ENCODE measurements at regions of chr12 and their contacts with region 1.

Region 1: GRCh38 chr12:49018261-49019119 is at the start of gene PRKAG1:
- DNase-seq: peak; percentile 99
- CTCF ChIP-seq: peak; percentile 53

Region 2: GRCh38 chr12:49031553-49032162 is 13.2 kb after region 1 on chr12:
- CTCF ChIA-PET with region 1: interaction called, 203 read pairs
- POLR2A ChIA-PET with region 1: interaction called, 3 read pairs
- DNase-seq: no peak
- CTCF ChIP-seq: no peak

Region 3: DNA sequence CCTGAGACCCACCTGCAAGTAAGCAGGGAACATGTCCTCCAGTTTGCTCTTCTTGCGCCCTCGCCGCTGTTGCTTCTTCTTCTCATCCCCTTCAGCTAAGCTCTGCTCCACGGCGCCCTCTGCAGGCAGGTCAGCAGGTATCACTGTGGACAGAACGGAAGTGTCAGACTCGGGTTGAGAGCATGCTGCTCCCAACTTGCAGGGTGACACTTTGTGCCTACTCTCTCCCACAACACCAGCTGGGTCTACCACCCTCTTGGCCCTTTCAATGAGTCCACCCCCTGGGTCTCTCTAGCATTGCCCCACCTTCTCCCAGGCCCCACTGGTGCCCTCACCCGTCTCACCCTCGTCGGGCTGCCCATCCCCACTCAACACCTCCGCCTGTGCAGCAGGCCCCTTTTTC is 25.4 kb after region 1 on chr12:
- CTCF ChIA-PET with region 1: interaction called, 203 read pairs
- POLR2A ChIA-PET with region 1: no interaction called
- DNase-seq: peak; percentile 85
- CTCF ChIP-seq: peak; percentile 81

Region 4: DNA sequence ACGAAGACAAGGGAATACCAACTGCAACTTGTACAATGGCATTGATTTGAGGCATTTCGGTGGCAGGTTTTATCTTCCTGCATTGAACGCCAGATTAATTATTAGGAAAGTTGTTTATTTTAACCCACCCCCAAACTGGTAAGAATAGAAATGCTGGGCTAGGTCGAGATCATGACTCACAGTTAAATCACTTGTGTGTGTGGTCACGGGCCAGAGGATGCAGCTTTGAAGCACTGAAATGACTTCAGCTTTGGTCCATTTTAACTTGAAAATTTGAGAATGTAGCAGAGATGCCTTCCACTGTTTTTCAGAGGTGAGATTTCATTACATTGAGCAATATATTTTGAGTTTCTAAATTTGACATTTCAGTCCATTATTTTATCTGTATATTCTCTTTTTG is 496.8 kb after region 1 on chr12:
- CTCF ChIA-PET with region 1: no interaction called
- POLR2A ChIA-PET with region 1: no interaction called
- DNase-seq: no peak
- CTCF ChIP-seq: no peak